Sciatic nerve (tissue), 2 donors: ENCODE measurements at regions of chr22 and their contacts with region 1.

Region 1: GRCh38 chr22:31970490-31971444 is 26.4 kb downstream of the YWHAH start:
- DNase-seq: peak; percentile 90
- ATAC-seq: peak; percentile 97

Region 2: GRCh38 chr22:32050678-32051515 is 80.1 kb after region 1 on chr22:
- intact Hi-C with region 1: no loop called
- DNase-seq: no peak
- ATAC-seq: peak; percentile 92

Region 3: GRCh38 chr22:32265882-32266767 is 295.4 kb after region 1 on chr22:
- intact Hi-C with region 1: loop called (anchors 10 kb)
- DNase-seq: peak; percentile 77
- ATAC-seq: peak; percentile 51

Region 4: GRCh38 chr22:33000342-33001280 is 1029.8 kb after region 1 on chr22:
- intact Hi-C with region 1: loop called (anchors 10 kb)
- DNase-seq: peak; percentile 79
- ATAC-seq: peak; percentile 81